Activated B cell treated with CpG ODN at 0.5 μM for 24 hours (primary cell): ENCODE measurements at regions of chr6 and their contacts with region 1.

Region 1: GRCh38 chr6:7140631-7141378 is 33.0 kb downstream of the RREB1 start:
- DNase-seq: peak; percentile 78
- ATAC-seq: peak; percentile 82
- H3K4me3 Mint-ChIP-seq: peak overlapping the region; percentile 85
- H3K27ac Mint-ChIP-seq: peak overlapping the region; percentile 89
- H3K4me1 Mint-ChIP-seq: peaks cover 77% of the 10 kb centered on the region
- H3K27me3 Mint-ChIP-seq: no peaks in the 10 kb centered on the region
- CTCF ChIP-seq: no peak

Region 2: DNA sequence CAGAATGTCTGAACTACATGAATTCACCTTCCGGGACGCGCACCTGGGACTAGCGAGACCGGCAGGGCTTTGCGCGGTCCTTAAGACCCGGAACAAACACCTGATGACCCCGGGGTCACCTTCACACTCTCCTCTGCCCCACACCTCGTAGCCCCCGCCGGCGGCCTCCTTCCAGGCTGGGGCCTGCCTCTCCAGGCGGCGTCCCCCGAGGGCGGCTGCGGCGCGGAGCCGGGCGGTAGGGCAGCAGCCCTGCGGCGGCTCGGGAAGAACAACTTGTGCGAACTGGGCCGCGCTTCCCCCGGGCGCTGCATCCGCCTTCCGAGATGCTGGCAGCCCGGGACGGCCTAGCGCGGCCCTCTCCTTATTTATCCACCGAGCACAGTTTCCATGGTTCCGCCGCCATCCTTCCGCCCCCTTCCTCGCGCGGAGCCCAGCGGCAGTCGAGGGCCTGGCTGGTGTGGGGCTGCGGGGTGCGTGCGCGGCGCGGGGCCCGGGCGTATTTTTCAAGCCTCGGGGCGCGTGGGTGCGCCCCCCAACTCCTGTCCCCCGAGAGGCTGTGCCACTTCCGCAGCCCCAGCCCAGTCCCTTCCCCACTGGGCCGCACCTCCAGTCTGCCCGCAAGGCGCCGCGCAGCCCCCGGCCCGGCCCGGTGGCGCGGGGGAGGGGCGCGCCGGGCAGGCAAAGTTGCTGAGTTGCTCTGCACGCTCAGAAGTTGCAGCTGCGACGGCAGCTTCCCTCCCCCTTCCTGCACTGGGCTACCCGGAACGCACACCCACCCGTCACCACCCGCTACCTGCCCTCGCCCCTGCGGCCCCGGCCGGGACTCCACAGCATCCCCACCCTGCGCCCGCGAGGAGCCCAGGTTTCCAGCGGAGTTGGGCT is 89.3 kb before region 1 on chr6:
- CTCF ChIA-PET with region 1: no interaction called
- POLR2A ChIA-PET with region 1: no interaction called
- intact Hi-C with region 1: no loop called
- DNase-seq: peak; percentile 61
- ATAC-seq: peak; percentile 86
- H3K4me3 Mint-ChIP-seq: peak overlapping the region; percentile 76
- H3K27ac Mint-ChIP-seq: peak overlapping the region; percentile 56
- H3K4me1 Mint-ChIP-seq: peaks cover 38% of the 10 kb centered on the region
- H3K27me3 Mint-ChIP-seq: no peaks in the 10 kb centered on the region
- CTCF ChIP-seq: no peak

Region 3: GRCh38 chr6:7112741-7113313 is 28.0 kb before region 1 on chr6:
- CTCF ChIA-PET with region 1: no interaction called
- POLR2A ChIA-PET with region 1: interaction called, 10 read pairs
- intact Hi-C with region 1: loop called (anchors 1 kb)
- DNase-seq: peak; percentile 44
- ATAC-seq: peak; percentile 72
- H3K4me3 Mint-ChIP-seq: peak overlapping the region; percentile 82
- H3K27ac Mint-ChIP-seq: peak overlapping the region; percentile 92
- H3K4me1 Mint-ChIP-seq: peaks cover 74% of the 10 kb centered on the region
- H3K27me3 Mint-ChIP-seq: no peaks in the 10 kb centered on the region
- CTCF ChIP-seq: no peak

Region 4: GRCh38 chr6:7129784-7130569 is 10.8 kb before region 1 on chr6:
- CTCF ChIA-PET with region 1: no interaction called
- POLR2A ChIA-PET with region 1: interaction called, 4 read pairs
- intact Hi-C with region 1: loop called (anchors 1 kb)
- DNase-seq: no peak
- ATAC-seq: peak; percentile 56
- H3K4me3 Mint-ChIP-seq: no peak overlapping the region
- H3K27ac Mint-ChIP-seq: peak overlapping the region; percentile 32
- H3K4me1 Mint-ChIP-seq: peaks cover 86% of the 10 kb centered on the region
- H3K27me3 Mint-ChIP-seq: no peaks in the 10 kb centered on the region
- CTCF ChIP-seq: no peak

Region 5: GRCh38 chr6:7479801-7480266 is 339.0 kb after region 1 on chr6:
- CTCF ChIA-PET with region 1: no interaction called
- POLR2A ChIA-PET with region 1: no interaction called
- intact Hi-C with region 1: no loop called
- DNase-seq: no peak
- ATAC-seq: no peak
- H3K4me3 Mint-ChIP-seq: no peak overlapping the region
- H3K27ac Mint-ChIP-seq: no peak overlapping the region
- H3K4me1 Mint-ChIP-seq: no peaks in the 10 kb centered on the region
- H3K27me3 Mint-ChIP-seq: no peaks in the 10 kb centered on the region
- CTCF ChIP-seq: no peak